ENCODE measurements at regions of chr19 and their contacts with region 1.

Region 1: GRCh38 chr19:17235618-17236377 is 9.8 kb downstream of the OCEL1 start:
- DNase-seq: peak; percentile 91

Region 2: GRCh38 chr19:17069218-17069617 is 166.6 kb before region 1 on chr19:
- intact Hi-C with region 1: loop called (anchors 2 kb)
- DNase-seq: no peak

Measured in cardiac septum (tissue), 1 donor.